Prostate gland (tissue), 2 donors: ENCODE measurements at regions of chr6 and their contacts with region 1.

Region 1: DNA sequence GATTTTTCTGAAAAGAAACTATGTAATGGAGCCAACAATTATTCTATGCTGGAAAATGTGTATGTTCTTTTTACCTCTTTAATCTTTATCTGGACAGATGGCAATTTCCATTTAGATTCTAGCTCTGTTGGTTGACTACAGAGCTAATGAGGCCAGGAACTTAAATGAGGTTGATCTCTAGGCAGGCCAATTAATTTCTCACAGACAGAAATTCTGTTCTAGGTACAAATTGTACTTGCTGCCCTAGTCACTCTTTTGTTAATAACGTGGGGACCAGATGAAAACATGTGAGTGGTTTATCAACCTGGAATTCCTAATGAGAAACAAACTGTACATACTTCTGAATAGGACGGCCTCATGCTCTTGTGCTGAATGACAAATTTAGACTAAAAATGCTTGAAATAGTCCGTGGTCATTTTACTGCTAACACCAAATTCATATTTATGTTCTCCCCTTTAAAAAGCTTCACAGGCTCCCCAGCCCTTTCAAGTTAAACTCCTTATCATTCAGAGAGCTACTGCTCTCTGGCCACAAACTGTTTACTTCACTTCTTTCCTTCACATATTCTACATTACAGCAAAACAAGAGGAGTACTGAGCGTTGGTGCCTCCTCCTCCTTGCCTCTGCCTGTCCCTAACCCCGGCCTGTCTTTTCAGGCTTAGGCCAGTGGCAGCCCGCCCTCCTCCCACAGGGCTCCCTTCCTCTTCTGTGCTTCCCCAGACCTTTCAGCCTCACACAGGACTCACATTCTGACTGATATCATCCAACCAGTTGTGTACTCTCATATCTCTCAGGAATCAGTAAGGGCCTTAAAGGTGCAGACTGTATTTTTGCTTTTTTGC is 41.4 kb downstream of the DTNBP1 start:
- DNase-seq: no peak
- H3K4me3 ChIP-seq: no peak overlapping the region
- H3K27ac ChIP-seq: peak overlapping the region; percentile 31 to 33
- H3K4me1 ChIP-seq: no peaks in the 10 kb centered on the region
- H3K27me3 ChIP-seq: no peaks in the 10 kb centered on the region
- CTCF ChIP-seq: no peak
- POLR2A ChIP-seq: no peak

Region 2: GRCh38 chr6:14130435-14131075 is 1490.9 kb before region 1 on chr6:
- intact Hi-C with region 1: loop called (anchors 10 kb)
- DNase-seq: no peak
- H3K4me3 ChIP-seq: no peak overlapping the region
- H3K27ac ChIP-seq: no peak overlapping the region
- H3K4me1 ChIP-seq: no peaks in the 10 kb centered on the region
- H3K27me3 ChIP-seq: no peaks in the 10 kb centered on the region
- CTCF ChIP-seq: no peak
- POLR2A ChIP-seq: no peak

Region 3: GRCh38 chr6:14210663-14211561 is 1410.5 kb before region 1 on chr6:
- intact Hi-C with region 1: loop called (anchors 2 kb)
- DNase-seq: peak; percentile 93
- H3K4me3 ChIP-seq: peak overlapping the region; percentile 53 to 65
- H3K27ac ChIP-seq: peak overlapping the region; percentile 65 to 80
- H3K4me1 ChIP-seq: no peaks in the 10 kb centered on the region
- H3K27me3 ChIP-seq: no peaks in the 10 kb centered on the region
- CTCF ChIP-seq: peak; percentile 64 to 98 (median 90)
- POLR2A ChIP-seq: peak; percentile 21

Region 4: DNA sequence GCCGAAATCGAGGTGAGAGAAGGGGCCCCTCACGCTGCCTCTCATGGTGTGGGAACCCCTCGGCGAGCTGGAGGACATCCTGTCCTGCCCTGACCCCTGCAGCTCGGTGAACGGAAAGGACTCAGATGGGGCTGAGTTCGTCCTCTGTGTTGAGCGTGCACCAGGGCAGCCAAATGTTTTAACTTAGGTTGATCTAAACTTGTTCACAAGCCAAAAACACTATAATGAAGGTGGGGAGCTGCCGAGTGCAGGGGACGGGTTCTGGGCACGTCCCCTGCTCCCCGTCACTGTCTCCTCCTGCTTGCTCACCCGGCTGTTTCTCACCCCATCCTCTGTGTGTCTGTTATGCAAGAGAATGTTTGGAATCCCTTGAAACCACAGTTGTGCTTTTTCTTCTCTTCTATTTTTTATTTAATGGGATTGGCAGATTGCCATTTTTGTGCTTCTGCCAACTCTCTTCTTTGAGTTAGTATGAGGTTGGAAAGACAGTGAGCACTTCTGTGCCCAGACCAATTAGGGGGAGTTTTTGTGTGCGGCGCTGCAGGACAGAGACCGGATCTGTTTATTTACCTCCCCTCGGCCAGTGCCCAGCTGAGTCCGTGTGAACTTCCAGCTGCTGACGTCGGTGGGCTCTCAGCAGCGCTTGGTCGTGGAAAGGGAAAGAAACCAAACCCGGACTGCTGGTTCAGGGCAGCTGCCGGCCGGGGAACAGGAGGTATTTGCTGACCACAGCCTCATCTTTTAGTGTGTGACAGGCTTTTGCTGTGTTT is 116.7 kb before region 1 on chr6:
- intact Hi-C with region 1: loop called (anchors 5 kb)
- DNase-seq: peak; percentile 86
- H3K4me3 ChIP-seq: peak overlapping the region; percentile 7 to 15
- H3K27ac ChIP-seq: peak overlapping the region; percentile 71 to 74
- H3K4me1 ChIP-seq: peaks cover 19% of the 10 kb centered on the region
- H3K27me3 ChIP-seq: no peaks in the 10 kb centered on the region
- CTCF ChIP-seq: no peak
- POLR2A ChIP-seq: no peak

Region 5: GRCh38 chr6:15674690-15675386 is 53.4 kb after region 1 on chr6:
- intact Hi-C with region 1: no loop called
- DNase-seq: no peak
- H3K4me3 ChIP-seq: no peak overlapping the region
- H3K27ac ChIP-seq: no peak overlapping the region
- H3K4me1 ChIP-seq: no peaks in the 10 kb centered on the region
- H3K27me3 ChIP-seq: no peaks in the 10 kb centered on the region
- CTCF ChIP-seq: no peak
- POLR2A ChIP-seq: no peak

Region 6: DNA sequence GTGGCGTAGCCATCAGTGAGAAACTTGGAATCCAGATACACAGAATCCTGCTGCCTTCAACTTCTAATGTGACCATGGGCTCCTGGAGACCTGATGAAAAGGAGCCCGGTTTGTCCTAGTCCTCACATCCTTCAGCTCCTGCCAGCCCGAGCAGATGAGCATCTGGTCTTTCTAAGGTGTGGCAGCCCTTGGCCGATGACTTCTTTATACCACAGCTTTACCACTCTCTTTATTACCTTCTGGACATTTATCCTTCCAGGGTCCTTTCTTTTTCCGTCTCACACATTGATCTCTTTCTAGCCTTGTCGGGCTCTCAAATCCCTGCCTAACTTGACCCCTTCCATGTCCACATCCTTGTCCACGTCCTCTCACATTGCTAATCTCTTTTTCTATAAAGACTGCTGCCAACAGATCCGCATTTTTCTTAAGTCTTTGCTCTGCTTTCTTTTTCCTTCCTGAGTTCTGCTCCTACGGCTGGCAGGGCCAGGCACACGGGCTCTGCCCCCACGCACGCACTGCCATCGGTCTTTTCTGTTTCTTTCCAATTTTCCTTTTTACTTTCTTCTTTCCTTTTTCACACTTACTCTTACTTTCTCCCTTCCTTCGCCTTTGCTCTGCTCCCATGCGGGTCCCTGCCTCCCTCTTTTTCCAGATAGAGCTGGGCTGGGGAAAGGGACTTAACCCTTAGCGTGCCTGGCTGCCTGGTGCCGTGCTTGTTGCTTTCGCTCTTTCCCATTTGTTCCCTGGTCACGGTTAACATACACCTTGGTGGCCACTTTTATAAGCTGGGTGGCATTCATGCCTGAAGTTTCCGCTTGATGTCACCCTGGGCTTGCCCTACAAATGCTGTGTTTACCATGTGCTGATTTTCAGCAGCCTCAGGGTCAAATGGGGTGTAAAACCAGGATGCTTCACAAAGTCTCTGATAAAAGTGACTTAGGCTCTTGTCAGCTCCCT is 607.6 kb after region 1 on chr6:
- intact Hi-C with region 1: no loop called
- DNase-seq: no peak
- H3K4me3 ChIP-seq: no peak overlapping the region
- H3K27ac ChIP-seq: peak overlapping the region in 1 of 2 donors; percentile 46
- H3K4me1 ChIP-seq: peaks cover 5% of the 10 kb centered on the region
- H3K27me3 ChIP-seq: no peaks in the 10 kb centered on the region
- CTCF ChIP-seq: peak in 3 of 4 experiments; percentile 11 to 33 (median 21)
- POLR2A ChIP-seq: no peak